SK-N-SH (cell line): ENCODE measurements at regions of chr6 and their contacts with region 1.

Region 1: GRCh38 chr6:30219244-30219643 is 6.0 kb upstream of the TRIM26 start:
- DNase-seq: peak; percentile 72
- H3K4me3 ChIP-seq: peak overlapping the region in 1 of 2 experiments; percentile 35; a peak in 1 of 4 replicates
- H3K27ac ChIP-seq: no peak overlapping the region
- H3K4me1 ChIP-seq: peaks cover 0 to 6% of the 10 kb centered on the region in 2 experiments; a peak in 1 of 4 replicates
- H3K27me3 ChIP-seq: no peaks in the 10 kb centered on the region
- CTCF ChIP-seq: peak; percentile 90
- EP300 ChIP-seq: no peak
- RAD21 ChIP-seq: peak; percentile 84

Region 2: DNA sequence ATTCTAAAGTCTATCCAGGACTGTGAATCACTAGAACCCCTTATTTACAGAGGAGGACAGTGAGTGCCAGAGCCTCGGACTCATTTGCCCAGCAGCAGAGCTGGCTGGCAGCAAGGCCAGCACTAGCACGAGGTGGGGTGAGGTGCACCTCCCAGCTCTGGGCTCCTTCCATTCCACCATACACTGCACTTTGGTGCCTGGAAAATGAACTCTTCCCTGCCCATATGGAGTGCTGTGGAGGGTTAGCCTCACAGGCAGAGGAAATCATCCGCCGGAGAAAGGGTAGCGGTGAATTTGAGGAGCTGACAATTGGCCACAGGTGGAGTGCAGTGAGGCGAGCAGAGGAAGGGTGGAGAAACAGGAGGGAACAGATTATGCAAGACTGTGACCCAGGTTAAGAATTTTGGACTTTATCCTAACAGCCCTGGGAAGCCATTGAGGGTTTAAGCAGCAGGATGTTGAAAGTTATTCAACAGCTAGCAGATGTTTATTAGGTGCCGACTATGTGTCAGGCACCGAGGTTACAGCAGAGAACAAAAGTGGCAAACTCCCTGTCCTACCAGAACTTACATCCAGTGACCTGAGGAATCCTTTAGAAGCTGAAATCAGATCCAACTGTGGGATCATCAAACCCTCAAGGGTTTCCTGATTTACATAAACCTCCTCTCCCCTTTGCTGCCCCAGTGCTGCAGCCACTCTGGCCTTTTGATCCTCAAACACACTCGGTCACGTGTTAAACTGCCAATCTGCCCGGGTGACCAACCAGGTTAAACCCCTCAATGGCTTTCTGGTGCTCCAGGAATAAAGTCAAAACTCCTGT is 12.2 kb before region 1 on chr6:
- CTCF ChIA-PET with region 1: interaction called, 13 read pairs
- POLR2A ChIA-PET with region 1: no interaction called
- DNase-seq: no peak
- H3K4me3 ChIP-seq: no peak overlapping the region
- H3K27ac ChIP-seq: no peak overlapping the region
- H3K4me1 ChIP-seq: peaks cover 9 to 16% of the 10 kb centered on the region in 2 experiments; a peak in 3 of 4 replicates
- H3K27me3 ChIP-seq: no peaks in the 10 kb centered on the region
- CTCF ChIP-seq: no peak
- EP300 ChIP-seq: no peak
- RAD21 ChIP-seq: no peak

Region 3: GRCh38 chr6:30238174-30238795 is 19.0 kb after region 1 on chr6:
- CTCF ChIA-PET with region 1: interaction called, 14 read pairs
- POLR2A ChIA-PET with region 1: no interaction called
- DNase-seq: peak; percentile 44
- H3K4me3 ChIP-seq: no peak overlapping the region
- H3K27ac ChIP-seq: no peak overlapping the region
- H3K4me1 ChIP-seq: no peaks in the 10 kb centered on the region
- H3K27me3 ChIP-seq: no peaks in the 10 kb centered on the region
- CTCF ChIP-seq: peak; percentile 29; the same call in 1 of the 2 replicates
- EP300 ChIP-seq: no peak
- RAD21 ChIP-seq: peak; percentile 60

Region 4: DNA sequence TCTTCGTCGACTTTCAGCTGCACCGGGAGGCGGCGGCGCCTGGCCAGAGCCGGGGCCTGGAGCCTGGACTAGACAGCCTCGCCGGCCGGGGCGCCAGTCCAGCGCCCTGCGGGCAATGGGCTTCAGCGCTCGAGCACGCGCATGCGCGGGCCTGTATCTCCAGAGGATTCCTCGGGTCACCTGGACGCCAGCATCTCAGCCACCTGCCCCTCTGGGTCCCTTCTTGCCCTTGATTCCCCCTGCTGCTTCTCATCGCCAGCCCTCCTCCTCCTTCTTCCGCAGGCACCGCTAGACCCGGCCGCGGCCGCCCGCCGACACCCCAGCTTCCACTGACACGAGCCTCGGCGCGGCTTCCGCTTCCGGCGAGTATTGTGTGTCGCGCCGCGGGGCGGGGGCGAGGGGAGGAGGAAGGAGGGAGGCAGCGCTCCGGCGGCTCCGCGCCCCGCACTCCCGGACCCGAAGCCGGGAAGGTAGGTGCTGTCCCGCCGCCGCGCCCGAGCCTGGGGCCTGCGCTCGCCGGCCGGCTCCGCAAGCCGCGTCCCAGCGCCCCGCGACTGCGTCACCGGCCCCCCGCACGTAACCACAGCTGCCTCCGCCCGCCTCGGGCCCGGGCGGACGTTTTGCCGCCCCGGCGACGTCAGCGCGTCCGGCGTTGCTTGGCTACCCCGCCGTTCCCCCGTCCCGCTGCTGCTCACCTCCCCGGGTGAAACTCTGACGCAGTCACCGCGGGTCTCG is 107.4 kb after region 1 on chr6 and contains the start of gene TRIM39:
- CTCF ChIA-PET with region 1: interaction called, 19 read pairs
- POLR2A ChIA-PET with region 1: interaction called, 10 read pairs
- DNase-seq: peak; percentile 91
- H3K4me3 ChIP-seq: peak within 1 kb of the TSS; percentile 77 to 96
- H3K27ac ChIP-seq: peak within 1 kb of the TSS; percentile 89 to 98
- H3K4me1 ChIP-seq: peaks cover 6 to 7% of the 10 kb centered on the region in 2 experiments; a peak in 2 of 4 replicates
- H3K27me3 ChIP-seq: no peaks in the 10 kb centered on the region
- CTCF ChIP-seq: no peak
- EP300 ChIP-seq: no peak
- RAD21 ChIP-seq: no peak
- polyA plus RNA-seq, gene TRIM39: 6.5 and 7.4 TPM in 2 replicates

Region 5: DNA sequence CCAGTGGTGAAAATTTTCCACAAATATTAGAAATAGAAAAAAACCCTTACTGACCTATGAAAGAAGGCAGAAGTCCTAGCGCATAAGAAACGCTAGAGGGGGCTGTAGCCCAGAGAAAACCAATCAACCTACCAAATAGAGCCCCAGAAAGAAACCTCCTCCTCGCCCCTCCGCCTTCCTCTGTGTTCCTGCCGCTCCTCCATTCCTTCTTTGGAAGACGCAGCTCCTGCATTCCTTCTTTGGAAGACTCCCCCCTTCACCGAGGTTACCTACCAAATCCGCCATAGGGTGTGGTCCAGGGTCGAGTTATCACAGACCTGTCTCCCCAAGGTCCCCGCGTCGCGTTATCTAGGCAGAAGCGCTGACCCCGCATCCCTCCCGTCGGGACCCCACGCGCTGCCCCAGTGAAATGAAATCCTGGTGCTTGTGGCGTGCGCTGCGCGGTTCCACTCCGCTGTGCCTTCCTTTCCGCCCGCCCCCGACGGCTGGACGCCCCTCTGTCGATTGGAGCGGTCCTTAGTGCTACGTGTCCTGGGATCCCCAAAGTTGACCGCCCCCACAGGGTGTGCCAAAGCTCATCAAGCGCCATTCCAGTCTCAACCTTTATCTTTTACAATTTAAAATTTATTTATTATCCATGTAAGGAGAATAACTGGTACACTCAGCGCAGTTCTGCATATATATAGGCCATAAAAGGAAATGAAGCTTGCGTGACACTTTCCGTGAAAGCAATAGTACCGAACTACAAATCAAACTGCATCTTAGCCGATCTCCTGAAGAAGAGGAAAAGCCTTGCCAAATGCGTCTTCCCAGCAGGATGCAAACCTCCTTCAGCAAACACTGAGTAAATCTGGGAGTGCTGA is 138.7 kb after region 1 on chr6:
- CTCF ChIA-PET with region 1: interaction called, 11 read pairs
- POLR2A ChIA-PET with region 1: no interaction called
- DNase-seq: peak; percentile 76
- H3K4me3 ChIP-seq: peak overlapping the region; percentile 36 to 46
- H3K27ac ChIP-seq: no peak overlapping the region
- H3K4me1 ChIP-seq: peaks cover 0 to 4% of the 10 kb centered on the region in 2 experiments; a peak in 1 of 4 replicates
- H3K27me3 ChIP-seq: peaks cover 58% of the 10 kb centered on the region; the same call in 1 of the 2 replicates
- CTCF ChIP-seq: peak; percentile 86
- EP300 ChIP-seq: no peak
- RAD21 ChIP-seq: peak; percentile 75

Region 6: GRCh38 chr6:30396833-30397479 is 177.7 kb after region 1 on chr6:
- CTCF ChIA-PET with region 1: interaction called, 19 read pairs
- POLR2A ChIA-PET with region 1: no interaction called
- DNase-seq: peak; percentile 86
- H3K4me3 ChIP-seq: peak overlapping the region in 1 of 2 experiments; percentile 49; a peak in 1 of 4 replicates
- H3K27ac ChIP-seq: no peak overlapping the region
- H3K4me1 ChIP-seq: no peaks in the 10 kb centered on the region; a peak in 1 of 4 replicates
- H3K27me3 ChIP-seq: peaks cover 50% of the 10 kb centered on the region
- CTCF ChIP-seq: peak; percentile 88
- EP300 ChIP-seq: no peak
- RAD21 ChIP-seq: peak; percentile 79

Region 7: GRCh38 chr6:30960907-30961673 is 741.8 kb after region 1 on chr6:
- CTCF ChIA-PET with region 1: no interaction called
- POLR2A ChIA-PET with region 1: no interaction called
- DNase-seq: no peak
- H3K4me3 ChIP-seq: no peak overlapping the region
- H3K27ac ChIP-seq: no peak overlapping the region
- H3K4me1 ChIP-seq: no peaks in the 10 kb centered on the region; a peak in 1 of 4 replicates
- H3K27me3 ChIP-seq: peaks cover 6% of the 10 kb centered on the region; the same call in 1 of the 2 replicates
- CTCF ChIP-seq: no peak
- EP300 ChIP-seq: no peak
- RAD21 ChIP-seq: no peak